ENCODE measurements at regions of chr3 and their contacts with region 1.

Region 1: DNA sequence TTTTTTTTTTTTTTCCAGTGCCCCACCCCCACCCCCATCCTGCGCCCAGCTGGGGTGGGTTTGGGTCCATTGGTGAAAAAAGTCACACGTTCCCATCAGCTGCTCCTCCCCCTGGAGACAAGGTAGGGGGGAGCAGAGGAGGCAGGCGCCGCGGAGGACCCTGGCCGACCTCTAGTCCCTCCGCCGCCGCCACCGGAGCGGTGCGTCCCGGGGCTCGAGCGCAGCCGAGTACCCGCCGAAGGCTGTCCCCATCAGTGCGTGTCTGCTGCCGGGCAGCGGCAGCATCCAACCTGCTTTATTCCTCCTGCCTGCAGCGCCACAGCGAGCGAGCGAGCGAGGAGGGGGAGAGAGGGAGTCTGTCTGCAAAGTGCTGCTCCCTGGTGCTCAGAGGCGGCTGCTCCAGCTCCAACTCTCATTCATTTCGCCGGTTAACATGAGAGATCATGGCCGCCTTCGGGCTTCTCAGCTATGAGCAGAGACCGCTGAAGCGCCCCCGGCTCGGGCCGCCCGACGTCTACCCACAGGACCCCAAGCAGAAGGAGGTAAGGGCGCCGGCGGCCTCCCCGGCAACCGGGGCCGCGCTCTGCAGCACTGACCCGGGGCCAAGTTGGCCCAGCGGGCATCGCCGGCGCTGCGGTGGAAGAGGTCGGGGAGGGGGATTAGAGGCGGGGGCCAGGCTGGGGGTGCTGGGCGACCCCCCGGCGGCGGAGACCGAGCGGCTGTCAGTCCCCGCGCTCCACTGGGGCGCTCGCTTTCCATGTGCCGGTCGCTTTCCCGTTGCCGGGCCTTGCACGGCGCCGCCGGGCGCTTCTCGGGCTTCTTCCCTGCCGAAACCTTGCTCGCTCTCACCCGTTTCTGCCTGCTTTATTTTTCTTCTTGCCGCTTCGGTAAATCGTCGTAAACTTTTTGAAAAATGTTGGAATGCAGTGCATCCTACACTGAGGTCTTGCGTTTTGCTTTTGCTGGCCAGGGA is 1.3 kb downstream of the MED12L start:
- DNase-seq: peak; percentile 43
- H3K4me3 Mint-ChIP-seq: peak overlapping the region; percentile 77
- H3K27ac Mint-ChIP-seq: no peak overlapping the region
- H3K4me1 Mint-ChIP-seq: peaks cover 4% of the 10 kb centered on the region
- H3K27me3 Mint-ChIP-seq: peaks cover 11% of the 10 kb centered on the region
- CTCF ChIP-seq: peak; percentile 26

Region 2: DNA sequence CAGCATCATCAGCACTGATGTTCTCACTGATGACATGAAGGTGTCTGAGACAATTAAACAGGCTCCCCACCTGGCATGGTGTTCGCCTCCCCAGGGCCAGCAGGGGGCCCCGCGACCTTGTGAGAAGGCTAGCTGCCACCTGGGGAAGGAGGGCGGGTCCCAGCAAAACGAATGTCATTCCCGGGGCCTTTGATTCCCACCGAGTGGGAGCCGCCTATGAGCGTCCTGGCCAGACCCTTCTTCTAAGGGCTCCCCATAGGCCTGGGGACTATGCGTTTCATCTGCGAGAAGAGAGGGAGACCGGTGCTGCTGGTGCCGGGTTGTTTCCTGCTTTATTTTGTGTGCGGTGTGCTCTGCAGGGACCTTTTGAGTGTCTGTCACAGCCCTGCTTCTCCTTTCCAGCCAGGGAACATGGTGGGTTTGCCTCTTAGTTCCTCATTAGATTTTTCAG is 161.0 kb before region 1 on chr3:
- CTCF ChIA-PET with region 1: interaction called, 17 read pairs
- POLR2A ChIA-PET with region 1: no interaction called
- intact Hi-C with region 1: loop called (anchors 1 kb)
- DNase-seq: peak; percentile 72
- H3K4me3 Mint-ChIP-seq: no peak overlapping the region
- H3K27ac Mint-ChIP-seq: no peak overlapping the region
- H3K4me1 Mint-ChIP-seq: no peaks in the 10 kb centered on the region
- H3K27me3 Mint-ChIP-seq: peaks cover 5% of the 10 kb centered on the region
- CTCF ChIP-seq: peak; percentile 75

Region 3: DNA sequence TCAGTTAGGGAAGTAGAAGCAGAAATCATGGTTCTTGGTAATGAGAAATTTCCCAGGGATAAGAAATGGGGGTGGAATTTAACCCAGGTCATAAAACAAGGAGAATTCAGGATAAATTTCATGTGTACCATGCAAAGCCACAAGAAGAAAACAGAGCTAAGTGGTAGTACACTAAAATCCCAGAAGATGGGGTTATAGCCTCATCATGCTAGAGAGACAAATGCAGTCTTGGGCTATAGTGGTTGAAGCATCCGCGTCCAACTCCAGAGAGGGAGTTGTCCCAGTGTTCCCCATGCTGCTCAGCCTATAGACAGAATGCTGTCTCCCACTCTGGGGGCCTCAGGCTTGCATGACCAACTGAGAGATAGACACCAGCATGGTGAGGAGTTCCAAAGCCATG is 78.1 kb before region 1 on chr3:
- CTCF ChIA-PET with region 1: no interaction called
- POLR2A ChIA-PET with region 1: no interaction called
- intact Hi-C with region 1: loop called (anchors 1 kb)
- DNase-seq: peak; percentile 27
- H3K4me3 Mint-ChIP-seq: no peak overlapping the region
- H3K27ac Mint-ChIP-seq: no peak overlapping the region
- H3K4me1 Mint-ChIP-seq: peaks cover under 1% of the 10 kb centered on the region
- H3K27me3 Mint-ChIP-seq: no peaks in the 10 kb centered on the region
- CTCF ChIP-seq: peak; percentile 21

Region 4: DNA sequence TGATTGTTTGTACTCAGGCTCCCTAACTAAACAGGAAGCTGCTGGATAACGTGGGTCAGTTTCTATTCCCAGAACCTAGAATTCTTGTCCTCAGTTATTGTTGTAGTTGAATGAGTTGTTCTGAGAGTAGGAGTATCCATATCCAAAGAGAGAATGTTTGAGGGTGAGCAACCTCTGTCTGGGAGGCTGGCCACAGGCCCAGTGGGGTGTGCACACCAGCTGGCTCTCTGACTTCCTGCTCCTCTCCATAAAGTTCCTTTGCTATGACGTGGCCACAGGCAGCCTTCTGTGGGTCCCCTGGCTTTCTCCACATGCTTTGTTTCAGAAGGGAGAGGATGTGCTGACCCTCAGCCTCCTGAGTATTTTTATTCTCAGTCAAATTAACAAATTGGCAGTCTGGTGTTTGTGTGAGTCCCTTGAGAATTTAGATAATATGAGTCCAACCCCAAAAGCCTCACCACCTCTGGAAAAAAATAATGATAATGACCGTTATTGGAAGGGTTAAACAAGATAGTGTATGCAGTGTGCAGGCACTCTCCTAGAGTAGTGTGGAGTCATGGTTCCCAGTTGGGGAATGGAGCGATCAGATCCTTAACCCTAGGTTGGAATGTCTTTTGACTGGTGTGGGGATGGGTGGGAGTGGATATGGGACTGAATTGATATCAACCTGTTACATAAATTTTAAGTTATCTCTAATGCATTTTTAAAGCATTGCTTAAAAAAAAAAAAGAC is 48.9 kb before region 1 on chr3:
- CTCF ChIA-PET with region 1: no interaction called
- POLR2A ChIA-PET with region 1: no interaction called
- intact Hi-C with region 1: loop called (anchors 5 kb)
- DNase-seq: peak; percentile 70
- H3K4me3 Mint-ChIP-seq: no peak overlapping the region
- H3K27ac Mint-ChIP-seq: no peak overlapping the region
- H3K4me1 Mint-ChIP-seq: peaks cover 4% of the 10 kb centered on the region
- H3K27me3 Mint-ChIP-seq: no peaks in the 10 kb centered on the region
- CTCF ChIP-seq: no peak

Measured in MCF 10A (cell line).